Activated CD4-positive, alpha-beta T cell treated with anti-CD3 and anti-CD28 coated beads, Interleukin-2, amount 10 ng/mL, durations not matched to agents 24 days and 14 days (primary cell): ENCODE measurements at regions of chr20 and their contacts with region 1.

Region 1: GRCh38 chr20:44069203-44070011 is 117.6 kb downstream of the JPH2 start:
- DNase-seq: peak; percentile 92
- H3K4me3 Mint-ChIP-seq: peak overlapping the region; percentile 77
- H3K27ac Mint-ChIP-seq: peak overlapping the region; percentile 93
- H3K4me1 Mint-ChIP-seq: peaks cover 52% of the 10 kb centered on the region
- H3K27me3 Mint-ChIP-seq: peaks cover 2% of the 10 kb centered on the region

Region 2: GRCh38 chr20:43840382-43841070 is 228.9 kb before region 1 on chr20:
- intact Hi-C with region 1: loop called (anchors 10 kb)
- DNase-seq: peak; percentile 78
- H3K4me3 Mint-ChIP-seq: no peak overlapping the region
- H3K27ac Mint-ChIP-seq: peak overlapping the region; percentile 73
- H3K4me1 Mint-ChIP-seq: peaks cover 55% of the 10 kb centered on the region
- H3K27me3 Mint-ChIP-seq: peaks cover 4% of the 10 kb centered on the region

Region 3: GRCh38 chr20:43949741-43950618 is 119.4 kb before region 1 on chr20:
- intact Hi-C with region 1: loop called (anchors 2 kb)
- DNase-seq: peak; percentile 95
- H3K4me3 Mint-ChIP-seq: peak overlapping the region; percentile 43
- H3K27ac Mint-ChIP-seq: peak overlapping the region; percentile 61
- H3K4me1 Mint-ChIP-seq: peaks cover 67% of the 10 kb centered on the region
- H3K27me3 Mint-ChIP-seq: peaks cover 33% of the 10 kb centered on the region

Region 4: DNA sequence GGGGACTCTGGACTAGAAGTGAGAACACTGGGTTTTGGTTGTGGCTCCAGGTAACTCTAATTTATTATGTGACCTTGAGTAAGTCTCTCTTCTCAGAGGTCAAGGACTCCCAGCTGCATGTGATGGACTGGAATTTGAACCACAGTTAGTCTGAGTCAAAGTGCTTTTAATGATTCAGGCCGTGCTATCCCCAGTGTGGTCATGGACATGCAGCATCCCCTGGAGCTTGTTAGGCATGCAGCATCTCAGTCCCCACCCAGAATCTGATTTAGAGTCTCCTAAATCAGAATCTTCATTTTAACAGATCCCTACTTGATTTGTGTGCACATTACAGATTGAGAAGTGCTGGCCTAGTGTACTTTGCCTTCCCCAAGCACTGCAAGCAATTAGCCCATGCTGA is 80.5 kb before region 1 on chr20:
- intact Hi-C with region 1: no loop called
- DNase-seq: no peak
- H3K4me3 Mint-ChIP-seq: no peak overlapping the region
- H3K27ac Mint-ChIP-seq: no peak overlapping the region
- H3K4me1 Mint-ChIP-seq: peaks cover 10% of the 10 kb centered on the region
- H3K27me3 Mint-ChIP-seq: peaks cover 5% of the 10 kb centered on the region

Region 5: GRCh38 chr20:44028868-44029847 is 40.2 kb before region 1 on chr20:
- intact Hi-C with region 1: loop called (anchors 5 kb)
- DNase-seq: peak; percentile 76
- H3K4me3 Mint-ChIP-seq: peak overlapping the region; percentile 69
- H3K27ac Mint-ChIP-seq: peak overlapping the region; percentile 85
- H3K4me1 Mint-ChIP-seq: peaks cover 46% of the 10 kb centered on the region
- H3K27me3 Mint-ChIP-seq: peaks cover 38% of the 10 kb centered on the region